H1 (cell line): ENCODE measurements at regions of chr15 and their contacts with region 1.

Region 1: GRCh38 chr15:101381671-101382212 is 86.7 kb upstream of the SNRPA1 start:
- DNase-seq: no peak
- H3K4me3 ChIP-seq: no peak overlapping the region
- H3K27ac ChIP-seq: no peak overlapping the region
- H3K4me1 ChIP-seq: peaks cover 0 to 2% (median 0%) of the 10 kb centered on the region in 4 experiments; a peak in 1 of 7 replicates
- H3K27me3 ChIP-seq: no peaks in the 10 kb centered on the region
- CTCF ChIP-seq: no peak
- EP300 ChIP-seq: no peak
- POLR2A ChIP-seq: no peak
- RAD21 ChIP-seq: no peak

Region 2: DNA sequence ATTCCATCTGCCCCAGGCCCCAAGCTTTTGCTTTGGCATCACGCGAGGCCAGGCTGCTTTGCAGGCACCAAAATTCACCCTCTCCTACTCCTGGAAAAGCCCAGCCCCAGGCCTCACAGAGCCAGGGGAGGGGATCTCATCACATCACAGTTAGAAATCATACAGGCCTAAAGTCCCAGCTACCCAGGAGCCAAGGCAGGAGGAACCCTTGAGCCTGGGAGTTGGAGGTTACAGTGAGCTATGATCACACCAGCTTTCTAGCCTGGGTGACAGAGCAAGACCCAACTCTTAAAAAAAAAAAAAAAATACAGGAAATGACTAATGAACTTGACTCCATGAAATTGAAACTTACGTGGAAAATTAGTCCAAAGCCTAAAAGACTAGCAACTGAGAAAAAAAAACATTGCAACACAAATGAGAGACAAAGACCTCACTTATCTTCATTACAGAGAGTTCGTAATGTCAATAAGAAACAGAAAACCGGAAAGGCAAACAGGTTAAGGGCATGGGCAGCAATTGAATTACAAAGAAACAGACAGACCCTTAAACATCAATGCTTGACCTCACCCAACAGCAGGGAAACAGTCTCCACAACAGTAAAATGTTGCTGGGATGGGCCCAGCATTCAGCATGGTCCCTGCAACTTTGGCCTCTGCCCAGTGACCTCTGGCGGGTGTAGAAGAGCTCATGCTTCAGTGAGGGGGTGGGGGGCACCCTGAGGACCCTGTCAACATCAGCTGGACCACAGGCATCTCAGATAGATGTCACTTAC is 311.1 kb before region 1 on chr15:
- CTCF ChIA-PET with region 1: no interaction called
- POLR2A ChIA-PET with region 1: no interaction called
- DNase-seq: no peak
- H3K4me3 ChIP-seq: no peak overlapping the region
- H3K27ac ChIP-seq: peak overlapping the region; percentile 92
- H3K4me1 ChIP-seq: peaks cover 22 to 39% (median 30%) of the 10 kb centered on the region in 4 experiments
- H3K27me3 ChIP-seq: no peaks in the 10 kb centered on the region
- CTCF ChIP-seq: no peak
- EP300 ChIP-seq: no peak
- POLR2A ChIP-seq: no peak
- RAD21 ChIP-seq: no peak

Region 3: DNA sequence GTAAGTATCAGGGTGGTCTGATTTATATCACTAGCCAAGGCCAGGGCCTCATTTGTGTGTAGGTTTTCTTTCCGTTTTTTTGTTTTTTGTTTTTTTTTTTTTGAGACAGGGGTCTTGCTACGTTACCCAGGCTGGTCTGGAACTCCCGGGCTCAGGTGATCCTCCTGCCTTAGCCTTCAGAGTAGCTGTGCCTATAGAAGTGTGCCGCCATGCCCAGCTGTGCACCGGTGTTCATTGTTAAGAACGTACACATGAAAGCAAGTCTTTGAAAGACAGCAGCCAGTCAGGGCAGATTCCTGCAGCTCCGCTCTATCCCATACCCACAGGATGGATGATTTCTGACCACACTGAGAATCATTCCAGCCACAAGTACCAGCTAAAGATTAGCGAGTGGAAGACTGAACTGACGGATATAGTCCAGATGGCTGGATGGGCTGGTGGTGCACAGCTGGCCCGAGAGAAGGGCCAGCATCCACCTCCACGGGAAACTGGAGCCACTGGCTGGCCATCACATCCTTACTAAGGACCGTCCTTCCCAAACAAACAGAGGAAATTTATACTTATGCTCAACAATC is 12.4 kb after region 1 on chr15:
- CTCF ChIA-PET with region 1: interaction called, 11 read pairs
- POLR2A ChIA-PET with region 1: no interaction called
- DNase-seq: peak in 1 of 2 experiments; percentile 22
- H3K4me3 ChIP-seq: no peak overlapping the region
- H3K27ac ChIP-seq: no peak overlapping the region
- H3K4me1 ChIP-seq: peaks cover 0 to 5% (median 3%) of the 10 kb centered on the region in 4 experiments; a peak in 3 of 7 replicates
- H3K27me3 ChIP-seq: no peaks in the 10 kb centered on the region; a peak in 1 of 7 replicates
- CTCF ChIP-seq: no peak
- EP300 ChIP-seq: no peak
- POLR2A ChIP-seq: no peak
- RAD21 ChIP-seq: no peak

Region 4: DNA sequence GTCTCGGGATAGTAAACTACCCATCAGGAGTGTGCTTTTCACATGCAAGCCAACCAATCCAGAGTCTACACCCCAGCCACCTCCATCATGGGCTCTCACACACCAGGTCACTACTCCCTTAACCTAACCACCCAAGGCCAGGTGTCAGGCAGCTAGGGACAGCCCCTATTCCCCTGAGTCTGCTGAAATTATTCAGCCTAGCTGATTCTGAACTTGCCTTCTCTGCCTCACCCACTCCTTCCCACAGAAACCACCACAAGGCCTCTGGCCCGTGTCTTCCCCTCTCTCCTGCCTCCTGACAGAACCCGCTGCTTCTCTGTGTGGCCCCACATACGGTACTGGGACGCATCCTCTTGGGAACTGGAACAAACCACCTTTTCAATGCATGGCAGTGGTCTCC is 25.7 kb after region 1 on chr15:
- CTCF ChIA-PET with region 1: no interaction called
- POLR2A ChIA-PET with region 1: no interaction called
- DNase-seq: peak in 1 of 2 experiments; percentile 34
- H3K4me3 ChIP-seq: no peak overlapping the region
- H3K27ac ChIP-seq: no peak overlapping the region
- H3K4me1 ChIP-seq: peaks cover 0 to 11% (median 7%) of the 10 kb centered on the region in 4 experiments; a peak in 6 of 7 replicates
- H3K27me3 ChIP-seq: no peaks in the 10 kb centered on the region; a peak in 3 of 7 replicates
- CTCF ChIP-seq: no peak
- EP300 ChIP-seq: no peak
- POLR2A ChIP-seq: no peak
- RAD21 ChIP-seq: no peak

Region 5: GRCh38 chr15:101528108-101528916 is 146.6 kb after region 1 on chr15:
- CTCF ChIA-PET with region 1: no interaction called
- POLR2A ChIA-PET with region 1: no interaction called
- DNase-seq: peak in 1 of 2 experiments; percentile 33
- H3K4me3 ChIP-seq: no peak overlapping the region
- H3K27ac ChIP-seq: no peak overlapping the region
- H3K4me1 ChIP-seq: peaks cover 0 to 4% (median 0%) of the 10 kb centered on the region in 4 experiments; a peak in 1 of 7 replicates
- H3K27me3 ChIP-seq: no peaks in the 10 kb centered on the region
- CTCF ChIP-seq: no peak
- EP300 ChIP-seq: no peak
- POLR2A ChIP-seq: no peak
- RAD21 ChIP-seq: no peak